ENCODE measurements at regions of chr6 and their contacts with region 1.

Region 1: DNA sequence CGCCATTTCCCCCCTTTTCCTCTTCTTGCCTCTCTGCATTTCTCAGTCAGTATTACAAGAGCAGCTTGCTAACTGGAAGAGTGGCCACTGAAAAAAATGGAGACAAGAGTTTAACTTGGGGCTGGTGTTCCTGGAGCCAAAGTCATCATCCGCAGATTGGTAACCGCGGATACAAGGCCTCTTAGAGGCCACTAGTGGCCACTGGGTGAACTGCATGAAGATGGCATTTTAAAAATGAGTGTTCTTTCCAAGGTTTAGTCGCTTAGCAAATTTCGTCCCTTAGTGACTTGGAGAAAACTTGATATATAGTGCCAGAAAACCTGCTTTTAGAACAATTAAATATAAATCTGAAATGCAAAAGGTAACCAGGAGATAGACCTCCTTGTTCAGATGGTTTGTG is 4.8 kb downstream of the F13A1 start:
- DNase-seq: peak in 4 of 10 donors; percentile 20 to 60 (median 36)
- H3K4me3 ChIP-seq: peak overlapping the region in 1 of 59 donors; percentile 15
- H3K27ac ChIP-seq: no peak overlapping the region
- H3K27me3 ChIP-seq: peaks cover 0 to 19% (median 4%) of the 10 kb centered on the region in 45 donors
- CTCF ChIP-seq: peak; percentile 53 to 82 (median 76)

Region 2: DNA sequence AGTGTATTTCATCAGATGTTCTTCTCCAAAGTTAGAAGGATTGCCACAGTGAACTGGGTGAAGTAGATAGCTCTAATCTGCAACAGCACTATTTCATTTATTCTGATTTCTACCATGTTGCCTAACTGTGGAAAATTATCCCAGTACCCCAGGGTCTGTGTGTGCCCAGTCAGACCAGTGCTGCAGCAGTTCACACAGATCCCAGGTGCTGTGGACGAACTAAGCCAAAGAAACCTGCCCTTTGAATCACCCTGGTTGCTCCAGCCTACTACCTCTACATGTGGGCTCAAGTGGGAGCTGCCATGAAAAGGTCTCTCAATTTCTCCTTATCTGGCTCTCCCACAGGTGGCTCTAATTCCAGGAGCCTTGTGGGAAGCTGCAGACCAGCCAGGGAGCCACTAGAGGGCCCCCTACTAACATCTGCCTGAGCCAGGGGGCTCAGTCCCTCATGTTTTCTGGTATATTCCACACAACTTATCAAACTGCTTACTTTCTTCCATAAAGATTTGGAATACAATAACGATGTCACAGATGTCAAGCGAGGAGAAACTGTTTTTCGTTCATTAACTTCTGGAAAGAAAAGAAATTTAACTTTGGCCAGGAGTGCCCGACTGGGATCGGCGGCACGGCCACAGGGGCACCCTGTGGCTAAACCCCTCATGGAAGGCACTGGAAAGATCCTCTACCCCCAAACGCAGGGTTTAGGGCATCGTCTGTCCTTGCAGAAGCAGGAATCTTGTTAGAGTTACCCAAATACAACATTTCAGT is 241.3 kb after region 1 on chr6:
- intact Hi-C with region 1: loop called in 1 of 2 experiments (anchors 10 kb)
- DNase-seq: peak in 1 of 10 donors; percentile 45
- H3K4me3 ChIP-seq: no peak overlapping the region
- H3K27ac ChIP-seq: peak overlapping the region in 45 of 59 donors; percentile 3 to 87 (median 63)
- H3K27me3 ChIP-seq: peaks cover 0 to 5% (median 0%) of the 10 kb centered on the region in 45 donors
- CTCF ChIP-seq: peak in 55 of 56 donors; percentile 36 to 76 (median 64)

Region 3: GRCh38 chr6:7658544-7658943 is 1342.9 kb after region 1 on chr6:
- intact Hi-C with region 1: no loop called
- DNase-seq: no peak
- H3K4me3 ChIP-seq: no peak overlapping the region
- H3K27ac ChIP-seq: no peak overlapping the region
- H3K27me3 ChIP-seq: peaks cover 0 to 7% (median 0%) of the 10 kb centered on the region in 45 donors
- CTCF ChIP-seq: no peak

Measured in dorsolateral prefrontal cortex (tissue), 120 donors.